Sciatic nerve (tissue), 2 donors: ENCODE measurements at regions of chr4 and their contacts with region 1.

Region 1: GRCh38 chr4:860531-860930 is 34.6 kb upstream of the CPLX1 start:
- DNase-seq: no peak
- ATAC-seq: no peak

Region 2: DNA sequence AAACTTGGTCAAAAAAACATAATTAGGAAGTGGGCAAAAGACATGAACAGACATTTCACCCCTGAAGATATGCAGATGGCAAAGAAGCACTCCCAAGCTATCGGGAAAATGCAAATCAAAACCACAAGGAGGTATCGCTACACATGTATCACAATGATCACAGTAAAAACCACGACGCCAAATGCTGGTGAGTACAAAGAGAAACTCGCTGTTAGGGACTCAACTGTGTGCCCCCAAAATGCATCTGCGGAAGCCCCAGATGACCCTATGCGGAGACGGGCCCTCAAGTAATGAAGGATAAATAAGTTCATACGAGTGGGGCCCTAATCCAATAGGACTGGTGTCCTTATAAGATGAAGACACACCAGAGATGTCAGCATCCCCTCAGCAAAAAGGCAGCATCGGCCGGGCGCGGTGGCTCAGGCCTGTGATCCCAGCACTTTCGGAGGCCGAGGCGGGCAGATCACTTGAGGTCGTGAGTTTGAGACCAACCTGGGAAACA is 61.4 kb after region 1 on chr4:
- intact Hi-C with region 1: loop called (anchors 2 kb)
- DNase-seq: no peak
- ATAC-seq: no peak